Panc1 (cell line): ENCODE measurements at regions of chr7 and their contacts with region 1.

Region 1: GRCh38 chr7:100132697-100133151 is 6.0 kb downstream of the MBLAC1 start:
- DNase-seq: peak; percentile 74
- ATAC-seq: peak; percentile 88
- H3K4me3 ChIP-seq: no peak overlapping the region
- H3K27ac ChIP-seq: no peak overlapping the region
- H3K4me1 ChIP-seq: 0 out of 2 replicates have a peak, but pooled peaks cover 7% of the 10 kb centered on the region
- H3K27me3 ChIP-seq: no peaks in the 10 kb centered on the region
- CTCF ChIP-seq: peak; percentile 96

Region 2: GRCh38 chr7:99642027-99642426 is 490.7 kb before region 1 on chr7:
- CTCF ChIA-PET with region 1: no interaction called
- POLR2A ChIA-PET with region 1: no interaction called
- in situ Hi-C with region 1: no loop called
- intact Hi-C with region 1: no loop called
- DNase-seq: no peak
- ATAC-seq: no peak
- H3K4me3 ChIP-seq: no peak overlapping the region
- H3K27ac ChIP-seq: no peak overlapping the region
- H3K4me1 ChIP-seq: no peaks in the 10 kb centered on the region
- H3K27me3 ChIP-seq: no peaks in the 10 kb centered on the region
- CTCF ChIP-seq: no peak

Region 3: GRCh38 chr7:100119701-100120467 is 12.8 kb before region 1 on chr7:
- CTCF ChIA-PET with region 1: interaction called, 13 read pairs
- POLR2A ChIA-PET with region 1: no interaction called
- in situ Hi-C with region 1: no loop called
- intact Hi-C with region 1: no loop called
- DNase-seq: peak; percentile 61
- ATAC-seq: peak; percentile 85
- H3K4me3 ChIP-seq: peak overlapping the region; percentile 69 to 99
- H3K27ac ChIP-seq: peak overlapping the region; percentile 88
- H3K4me1 ChIP-seq: peaks cover 13% of the 10 kb centered on the region
- H3K27me3 ChIP-seq: no peaks in the 10 kb centered on the region
- CTCF ChIP-seq: no peak

Region 4: DNA sequence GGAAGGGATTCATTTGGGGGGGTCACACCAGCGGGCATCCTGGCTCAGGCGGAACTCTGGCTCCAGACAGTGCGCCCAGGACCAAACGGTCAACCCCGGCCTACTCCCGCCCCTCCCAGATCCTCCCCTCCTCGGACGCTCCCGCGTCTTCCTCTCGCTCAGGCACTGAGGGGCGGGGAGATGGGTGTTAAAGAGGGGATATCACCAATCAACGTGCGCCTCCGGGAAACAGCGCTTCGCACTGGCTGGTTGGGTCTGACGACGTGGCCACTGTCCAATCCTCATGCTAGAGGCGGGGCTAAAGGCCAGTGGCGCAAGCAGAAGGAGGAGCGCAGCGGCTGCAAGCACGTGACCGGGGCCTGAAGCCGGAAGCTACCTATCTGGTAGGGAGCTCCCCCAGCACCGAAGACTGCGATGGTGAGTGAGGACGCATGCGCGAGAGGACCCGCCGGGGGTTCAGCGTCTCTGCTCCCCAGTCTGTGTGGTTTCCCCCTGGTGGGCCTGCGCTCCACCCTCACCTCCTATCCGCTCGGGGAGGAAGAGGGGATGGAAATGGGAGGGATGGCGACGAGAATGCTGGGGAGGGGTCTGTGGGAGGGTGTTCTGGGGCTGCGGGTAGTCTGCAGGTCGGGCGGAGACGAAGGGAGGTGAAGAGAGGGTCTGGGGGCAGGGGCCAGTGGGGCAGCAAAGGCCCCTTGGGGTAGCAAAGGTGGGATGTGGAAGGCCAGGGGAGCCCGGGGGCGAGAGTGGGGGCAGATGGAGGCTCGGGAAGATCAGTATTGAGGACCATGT is 16.0 kb after region 1 on chr7 and contains the start of gene LAMTOR4:
- CTCF ChIA-PET with region 1: interaction called, 16 read pairs
- POLR2A ChIA-PET with region 1: no interaction called
- in situ Hi-C with region 1: no loop called
- intact Hi-C with region 1: no loop called
- DNase-seq: peak; percentile 99
- ATAC-seq: peak; percentile 99
- H3K4me3 ChIP-seq: peak within 1 kb of the TSS; percentile 77 to 95
- H3K27ac ChIP-seq: peak within 1 kb of the TSS; percentile 87
- H3K4me1 ChIP-seq: peaks cover 13% of the 10 kb centered on the region
- H3K27me3 ChIP-seq: no peaks in the 10 kb centered on the region
- CTCF ChIP-seq: no peak
- total RNA-seq, gene LAMTOR4: 224 TPM

Region 5: DNA sequence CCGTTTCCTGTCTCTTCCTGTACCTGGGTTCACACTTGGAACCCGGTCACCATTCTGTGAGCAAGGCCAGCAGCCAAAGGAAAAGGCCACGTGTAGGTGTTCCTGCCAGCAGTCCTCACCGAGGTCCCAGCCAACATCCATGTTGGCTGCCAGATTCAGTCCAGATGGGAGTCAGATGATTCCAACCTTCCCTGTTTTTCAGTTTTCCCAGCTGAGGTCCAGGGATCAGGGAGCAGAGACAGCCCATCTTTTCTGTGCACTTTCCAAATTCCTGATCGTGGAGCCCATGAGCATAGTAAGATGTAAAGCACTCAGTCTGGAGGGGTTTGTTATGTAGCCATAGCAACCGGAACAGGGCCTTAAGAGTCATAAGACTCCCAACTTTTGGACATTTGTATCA is 83.2 kb after region 1 on chr7:
- CTCF ChIA-PET with region 1: interaction called, 5 read pairs
- POLR2A ChIA-PET with region 1: interaction called, 3 read pairs
- in situ Hi-C with region 1: no loop called
- intact Hi-C with region 1: loop called (anchors 5 kb)
- DNase-seq: no peak
- ATAC-seq: no peak
- H3K4me3 ChIP-seq: no peak overlapping the region
- H3K27ac ChIP-seq: no peak overlapping the region
- H3K4me1 ChIP-seq: no peaks in the 10 kb centered on the region
- H3K27me3 ChIP-seq: no peaks in the 10 kb centered on the region
- CTCF ChIP-seq: no peak